PC-3 (cell line): ENCODE measurements at regions of chr7 and their contacts with region 1.

Region 1: GRCh38 chr7:130875265-130875741 is 141.3 kb upstream of the KLF14 start:
- DNase-seq: peak; percentile 71
- ATAC-seq: peak; percentile 39
- H3K4me3 ChIP-seq: no peak overlapping the region
- H3K27ac ChIP-seq: 0 out of 2 replicates have a peak overlapping the region, but pooled peaks have one; percentile 2
- H3K4me1 ChIP-seq: peaks cover 24% of the 10 kb centered on the region
- H3K27me3 ChIP-seq: no peaks in the 10 kb centered on the region
- CTCF ChIP-seq: peak; percentile 76

Region 2: DNA sequence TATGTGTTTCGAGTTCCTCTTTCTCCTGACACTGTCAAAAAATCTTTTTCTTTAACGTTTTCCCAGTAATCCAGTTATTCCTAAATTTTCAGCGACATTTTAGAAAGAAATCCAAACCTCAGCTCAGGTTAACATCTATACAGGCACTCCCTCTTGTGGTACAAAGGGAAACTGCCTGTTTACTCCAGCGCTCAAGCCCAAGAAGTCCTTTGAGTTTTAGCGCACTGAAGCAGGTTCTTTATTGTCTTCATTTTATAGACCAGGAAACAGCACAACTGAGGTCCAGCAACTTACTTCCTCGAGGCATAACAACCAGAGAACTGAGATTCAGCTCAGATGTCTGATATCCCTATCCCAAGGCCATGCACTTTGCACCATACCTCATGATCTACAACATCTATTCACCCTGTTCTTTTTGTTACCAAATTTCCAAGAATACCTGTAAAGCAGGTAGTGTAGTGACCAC is 165.2 kb after region 1 on chr7:
- CTCF ChIA-PET with region 1: interaction called, 3 read pairs
- POLR2A ChIA-PET with region 1: no interaction called
- intact Hi-C with region 1: loop called (anchors 1 kb)
- DNase-seq: peak; percentile 79
- ATAC-seq: peak; percentile 88
- H3K4me3 ChIP-seq: no peak overlapping the region
- H3K27ac ChIP-seq: no peak overlapping the region
- H3K4me1 ChIP-seq: peaks cover 15% of the 10 kb centered on the region
- H3K27me3 ChIP-seq: no peaks in the 10 kb centered on the region
- CTCF ChIP-seq: peak; percentile 94